ENCODE measurements at regions of chr2 and their contacts with region 1.

Region 1: GRCh38 chr2:132547074-132547687 is 122.8 kb downstream of the LYPD1 start:
- DNase-seq: peak; percentile 26
- H3K4me3 ChIP-seq: no peak overlapping the region
- CTCF ChIP-seq: peak; percentile 70

Region 2: GRCh38 chr2:131093006-131093695 is 1454.0 kb before region 1 on chr2 and contains the start of gene FAM168B:
- CTCF ChIA-PET with region 1: no interaction called
- POLR2A ChIA-PET with region 1: no interaction called
- DNase-seq: peak; percentile 21
- H3K4me3 ChIP-seq: peak within 1 kb of the TSS; percentile 80
- CTCF ChIP-seq: no peak

Region 3: DNA sequence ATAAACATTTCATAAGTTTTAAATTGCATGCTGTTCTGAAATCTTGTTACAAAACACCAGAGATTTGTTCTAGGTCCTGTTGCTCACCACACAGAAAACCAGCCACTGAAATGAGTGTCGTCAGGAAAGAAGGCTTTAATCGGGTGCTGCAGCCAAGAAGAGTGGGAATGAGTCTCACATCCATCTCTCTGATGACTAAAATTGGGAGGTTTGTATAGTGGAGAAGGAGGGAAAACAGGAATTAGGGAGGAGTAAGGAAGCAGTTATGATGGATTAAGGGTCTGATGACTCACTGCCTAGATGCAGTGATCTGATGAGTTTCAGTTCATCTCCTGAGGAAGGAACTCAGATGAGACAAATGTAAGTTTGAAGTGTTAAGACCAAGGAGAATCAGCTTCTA is 172.6 kb before region 1 on chr2:
- CTCF ChIA-PET with region 1: no interaction called
- POLR2A ChIA-PET with region 1: no interaction called
- DNase-seq: no peak
- H3K4me3 ChIP-seq: no peak overlapping the region
- CTCF ChIP-seq: no peak

Region 4: GRCh38 chr2:132519566-132519965 is 27.6 kb before region 1 on chr2:
- CTCF ChIA-PET with region 1: interaction called, 12 read pairs
- POLR2A ChIA-PET with region 1: no interaction called
- DNase-seq: no peak
- H3K4me3 ChIP-seq: no peak overlapping the region
- CTCF ChIP-seq: no peak

Region 5: GRCh38 chr2:132562245-132562644 is 15.1 kb after region 1 on chr2:
- CTCF ChIA-PET with region 1: interaction called, 45 read pairs
- POLR2A ChIA-PET with region 1: no interaction called
- DNase-seq: peak; percentile 28
- H3K4me3 ChIP-seq: no peak overlapping the region
- CTCF ChIP-seq: no peak

Region 6: GRCh38 chr2:132589111-132589830 is 42.1 kb after region 1 on chr2:
- CTCF ChIA-PET with region 1: no interaction called
- POLR2A ChIA-PET with region 1: no interaction called
- DNase-seq: no peak
- H3K4me3 ChIP-seq: no peak overlapping the region
- CTCF ChIP-seq: no peak

Region 7: DNA sequence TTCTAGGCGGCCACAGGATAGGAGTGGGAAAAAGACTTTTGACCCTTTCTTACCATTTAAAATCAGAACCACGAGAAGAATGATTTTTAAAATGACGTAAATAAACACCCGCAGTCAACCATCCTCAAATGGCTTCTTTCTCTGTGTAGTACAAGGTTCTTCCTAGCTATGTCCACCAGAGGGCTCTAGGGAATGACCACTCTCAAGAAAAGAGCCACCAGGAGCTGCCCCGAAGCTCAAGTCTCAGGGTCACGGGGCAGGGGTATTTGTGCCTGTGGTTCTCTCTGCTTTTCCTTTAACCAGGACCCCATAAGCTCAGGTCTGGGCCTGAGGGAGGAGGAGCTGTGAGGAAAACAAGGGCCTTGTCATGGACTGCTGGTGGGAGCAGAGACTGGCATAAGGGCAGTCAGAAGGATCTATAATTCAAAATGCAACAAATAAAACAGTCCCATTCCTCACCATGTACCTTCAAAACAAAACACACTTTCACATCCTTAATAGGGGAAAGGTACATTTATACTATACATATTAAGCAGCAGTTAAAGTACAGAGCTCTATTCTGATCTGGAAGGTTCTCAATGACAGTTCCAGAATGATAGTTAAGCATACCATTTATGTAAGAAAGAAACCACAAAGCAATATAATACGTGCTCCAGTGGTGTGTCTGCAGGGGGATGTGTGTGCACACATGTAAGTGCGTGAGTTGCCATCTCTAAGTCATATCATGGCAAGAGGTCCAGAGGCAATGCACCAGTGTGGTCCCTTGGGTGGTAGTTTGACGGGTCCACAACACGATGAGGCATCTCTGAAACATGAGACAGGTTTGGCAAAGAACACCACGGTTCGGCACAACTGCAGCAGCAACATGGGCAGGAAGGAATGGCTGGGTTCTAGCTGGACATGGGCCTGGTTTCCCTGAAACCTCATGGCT is 104.2 kb after region 1 on chr2:
- CTCF ChIA-PET with region 1: interaction called, 19 read pairs
- POLR2A ChIA-PET with region 1: no interaction called
- DNase-seq: no peak
- H3K4me3 ChIP-seq: no peak overlapping the region
- CTCF ChIP-seq: peak; percentile 50

Region 8: GRCh38 chr2:133146895-133147294 is 599.7 kb after region 1 on chr2:
- CTCF ChIA-PET with region 1: interaction called, 13 read pairs
- POLR2A ChIA-PET with region 1: no interaction called
- DNase-seq: no peak
- H3K4me3 ChIP-seq: no peak overlapping the region
- CTCF ChIP-seq: no peak

Region 9: GRCh38 chr2:133171393-133172004 is 624.3 kb after region 1 on chr2:
- CTCF ChIA-PET with region 1: interaction called, 101 read pairs
- POLR2A ChIA-PET with region 1: no interaction called
- DNase-seq: no peak
- H3K4me3 ChIP-seq: no peak overlapping the region
- CTCF ChIP-seq: peak; percentile 44

Measured in AG04449 (cell line).